Activated CD4-positive, alpha-beta memory T cell treated with anti-CD3 and anti-CD28 coated beads for 36 hours (primary cell): ENCODE measurements at regions of chr5 and their contacts with region 1.

Region 1: GRCh38 chr5:135887351-135887864 is 8.2 kb downstream of the IL9 start:
- DNase-seq: peak; percentile 77
- H3K4me3 Mint-ChIP-seq: no peak overlapping the region
- H3K27ac Mint-ChIP-seq: no peak overlapping the region
- H3K4me1 Mint-ChIP-seq: peaks cover 22% of the 10 kb centered on the region
- H3K27me3 Mint-ChIP-seq: peaks cover 21% of the 10 kb centered on the region

Region 2: DNA sequence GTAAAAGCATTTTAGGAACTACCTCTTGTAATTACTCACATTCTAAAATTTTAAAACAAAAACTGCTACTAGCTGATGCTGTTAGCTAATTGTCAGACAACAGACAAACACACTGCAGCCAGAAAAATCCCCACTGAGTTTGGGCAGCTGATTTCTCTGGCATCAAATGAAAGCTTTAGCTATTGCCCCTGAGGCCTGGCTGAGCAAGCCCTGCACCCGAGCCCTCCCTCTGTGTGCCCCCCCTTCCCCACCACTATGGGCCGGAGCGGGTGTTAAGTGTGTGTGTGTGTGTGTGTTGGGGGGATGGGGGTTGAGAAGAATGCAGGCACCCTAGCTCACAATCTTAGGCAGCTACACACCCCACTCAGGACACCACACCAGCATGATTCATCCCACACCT is 354.1 kb before region 1 on chr5:
- CTCF ChIA-PET with region 1: no interaction called
- POLR2A ChIA-PET with region 1: no interaction called
- intact Hi-C with region 1: no loop called
- DNase-seq: no peak
- H3K4me3 Mint-ChIP-seq: no peak overlapping the region
- H3K27ac Mint-ChIP-seq: no peak overlapping the region
- H3K4me1 Mint-ChIP-seq: peaks cover 5% of the 10 kb centered on the region
- H3K27me3 Mint-ChIP-seq: peaks cover 60% of the 10 kb centered on the region

Region 3: GRCh38 chr5:135761746-135762145 is 125.7 kb before region 1 on chr5:
- CTCF ChIA-PET with region 1: no interaction called
- POLR2A ChIA-PET with region 1: no interaction called
- intact Hi-C with region 1: no loop called
- DNase-seq: no peak
- H3K4me3 Mint-ChIP-seq: no peak overlapping the region
- H3K27ac Mint-ChIP-seq: no peak overlapping the region
- H3K4me1 Mint-ChIP-seq: no peaks in the 10 kb centered on the region
- H3K27me3 Mint-ChIP-seq: no peaks in the 10 kb centered on the region

Region 4: DNA sequence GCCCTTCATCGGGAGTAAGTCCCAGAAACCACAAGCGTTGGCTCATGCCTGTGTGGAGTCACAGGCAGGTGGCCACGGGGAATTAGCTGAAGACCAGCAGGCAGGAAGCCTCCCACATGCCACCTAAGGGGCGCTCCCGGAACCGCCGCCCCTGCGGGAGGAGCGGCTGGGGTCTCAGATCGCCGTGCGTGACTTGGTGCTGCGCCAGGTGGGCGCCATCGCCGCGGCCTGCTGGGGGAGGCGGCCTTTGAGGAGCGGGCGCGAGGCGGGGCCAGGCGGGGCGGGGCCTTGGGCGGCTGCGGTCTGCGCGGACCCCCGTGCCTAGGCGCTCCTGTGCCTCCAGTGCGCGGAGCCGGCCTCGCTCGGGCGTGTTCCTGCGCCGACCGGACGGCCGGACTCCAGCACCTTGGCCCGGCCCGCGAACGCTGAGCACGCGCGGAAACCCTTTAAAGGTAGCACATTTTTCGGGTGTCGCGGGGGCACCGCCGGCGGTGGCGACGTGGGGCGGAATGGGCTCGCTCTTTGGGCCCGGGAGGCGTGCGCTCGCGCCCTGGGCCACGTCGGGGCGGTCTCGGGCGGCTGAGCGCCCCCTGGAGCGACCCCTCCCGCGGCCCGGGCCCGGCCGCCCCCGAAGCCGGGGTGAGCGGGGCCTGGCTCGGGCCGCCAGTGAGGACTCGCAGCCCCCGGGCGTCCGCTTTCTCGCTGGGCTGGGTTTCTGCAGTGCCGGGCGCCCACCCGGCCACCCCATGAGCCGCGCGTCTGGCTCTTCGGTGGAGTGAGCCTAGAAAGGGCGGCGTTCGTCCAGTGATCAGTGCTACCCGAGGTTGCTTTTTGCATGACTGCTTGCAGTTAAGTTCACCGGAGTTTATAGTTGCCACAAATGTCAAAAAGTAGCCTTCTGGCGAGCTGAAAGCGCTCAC is 42.9 kb after region 1 on chr5:
- CTCF ChIA-PET with region 1: no interaction called
- POLR2A ChIA-PET with region 1: no interaction called
- intact Hi-C with region 1: loop called (anchors 5 kb)
- DNase-seq: no peak
- H3K4me3 Mint-ChIP-seq: no peak overlapping the region
- H3K27ac Mint-ChIP-seq: no peak overlapping the region
- H3K4me1 Mint-ChIP-seq: peaks cover 3% of the 10 kb centered on the region
- H3K27me3 Mint-ChIP-seq: peaks cover 47% of the 10 kb centered on the region

Region 5: DNA sequence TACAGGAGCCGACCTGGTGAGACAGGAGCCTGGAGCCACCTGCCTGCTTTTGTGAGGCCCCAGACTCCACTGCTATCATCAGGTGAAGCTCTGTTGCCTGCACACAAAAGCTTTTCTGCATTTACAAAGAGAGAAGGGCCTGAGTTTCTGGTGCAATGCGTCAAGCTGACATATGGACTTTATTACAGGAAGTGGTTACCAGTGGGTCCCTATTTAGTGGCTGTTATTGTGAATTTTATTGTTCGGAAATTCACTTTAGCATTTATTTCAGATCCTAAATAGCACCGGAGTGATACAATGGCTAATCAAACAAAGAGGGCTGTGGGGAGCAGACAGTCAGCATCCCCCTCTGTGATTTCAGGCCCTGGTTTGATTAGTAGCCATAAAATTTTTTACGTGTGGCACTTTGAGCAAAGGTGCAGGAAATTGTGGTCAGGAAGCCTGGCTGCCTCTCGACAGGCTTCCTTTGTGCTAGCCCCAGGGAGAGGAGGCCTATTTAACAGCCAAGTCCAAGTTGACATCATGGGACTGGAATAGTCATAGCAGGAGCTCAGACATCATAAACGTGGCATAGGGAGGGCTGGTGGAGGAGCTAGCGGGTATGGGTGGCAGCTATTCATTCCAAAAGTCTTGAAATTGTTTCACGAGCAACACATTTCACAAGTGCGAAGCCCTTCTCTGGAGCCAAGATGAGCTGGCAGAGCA is 149.7 kb after region 1 on chr5:
- CTCF ChIA-PET with region 1: interaction called, 8 read pairs
- POLR2A ChIA-PET with region 1: interaction called, 11 read pairs
- intact Hi-C with region 1: loop called (anchors 1 kb)
- DNase-seq: peak; percentile 82
- H3K4me3 Mint-ChIP-seq: no peak overlapping the region
- H3K27ac Mint-ChIP-seq: peak overlapping the region; percentile 71
- H3K4me1 Mint-ChIP-seq: peaks cover 28% of the 10 kb centered on the region
- H3K27me3 Mint-ChIP-seq: no peaks in the 10 kb centered on the region

Region 6: DNA sequence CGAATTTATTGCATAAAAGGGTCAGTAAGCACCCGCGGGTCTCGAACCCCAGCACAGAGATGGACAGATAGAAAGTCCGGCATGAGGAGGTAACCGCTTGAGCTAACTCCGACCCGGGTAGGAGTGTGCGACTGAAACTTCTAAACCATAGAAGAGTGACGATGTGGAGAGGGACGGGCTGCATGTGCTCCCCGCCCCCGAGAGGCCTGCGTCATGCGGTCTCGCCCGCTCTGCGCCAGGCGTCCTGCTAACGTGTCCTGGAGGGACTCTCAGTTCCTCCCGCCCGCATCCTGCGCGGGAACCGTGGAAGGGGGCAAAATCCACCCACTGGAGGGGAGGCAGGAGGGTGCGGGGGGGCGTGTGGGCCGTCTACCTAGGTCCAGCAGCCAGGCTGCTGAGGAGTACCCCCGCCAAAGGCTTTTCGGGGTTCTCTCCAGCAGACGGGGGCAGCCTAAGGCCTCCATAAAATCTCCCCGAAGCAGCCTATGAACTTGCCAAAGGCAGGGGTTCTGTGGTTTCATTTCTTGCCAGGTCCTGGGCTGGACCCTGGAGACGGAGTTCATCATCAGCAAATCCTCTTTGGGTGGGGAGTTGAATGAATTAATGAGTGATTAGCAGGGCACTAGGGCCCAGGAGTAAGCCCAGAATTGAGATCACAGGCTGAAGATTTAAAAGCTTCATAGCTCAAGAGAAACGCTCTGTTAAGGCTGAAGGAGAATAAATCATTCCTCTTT is 193.2 kb after region 1 on chr5:
- CTCF ChIA-PET with region 1: interaction called, 37 read pairs
- POLR2A ChIA-PET with region 1: interaction called, 3 read pairs
- intact Hi-C with region 1: loop called (anchors 1 kb)
- DNase-seq: peak; percentile 85
- H3K4me3 Mint-ChIP-seq: peak overlapping the region; percentile 56
- H3K27ac Mint-ChIP-seq: peak overlapping the region; percentile 59
- H3K4me1 Mint-ChIP-seq: peaks cover 9% of the 10 kb centered on the region
- H3K27me3 Mint-ChIP-seq: peaks cover 33% of the 10 kb centered on the region